Activated T-helper 2 cell treated with anti-CD3 and anti-CD28 coated beads, Interferon-gamma antibody, Interleukin-2, Interleukin-4, amounts not matched to agents 10 μg/mL and 5 μg/mL and 100 μg/mL, durations not matched to agents 14 hours and 24 hours and 36 hours (primary cell): ENCODE measurements at regions of chr6 and their contacts with region 1.

Region 1: GRCh38 chr6:44265007-44265721 is at the start of gene NFKBIE:
- DNase-seq: peak; percentile 89
- H3K4me3 Mint-ChIP-seq: peak within 1 kb of the TSS; percentile 97
- H3K27ac Mint-ChIP-seq: peak within 1 kb of the TSS; percentile 91
- H3K4me1 Mint-ChIP-seq: peaks cover 43% of the 10 kb centered on the region
- H3K27me3 Mint-ChIP-seq: peaks cover 18% of the 10 kb centered on the region
- total RNA-seq, gene NFKBIE: 23.8 and 25.1 TPM in 2 replicates

Region 2: DNA sequence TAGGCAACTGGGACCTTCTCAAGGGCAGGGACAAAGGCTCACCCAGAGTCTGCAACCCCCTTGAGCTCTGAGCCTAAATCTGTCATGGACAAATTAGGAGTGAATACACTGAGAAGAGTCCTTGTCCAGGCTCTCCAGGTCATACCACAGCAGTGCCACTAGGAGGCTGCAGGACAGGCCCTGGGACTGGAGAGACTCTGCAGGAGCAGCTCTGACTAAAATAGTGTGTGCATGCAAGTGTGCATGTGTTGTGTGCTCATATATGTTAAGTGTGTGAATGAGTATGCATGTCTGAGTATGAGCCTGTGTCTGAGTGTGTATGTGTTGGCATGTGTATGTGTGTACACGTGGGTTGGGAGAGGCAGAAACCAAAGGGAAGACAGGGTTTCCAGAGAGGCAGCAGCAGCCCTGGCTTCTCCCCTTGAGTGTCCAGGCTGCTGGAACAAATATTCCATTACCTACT is 165.0 kb before region 1 on chr6:
- intact Hi-C with region 1: no loop called
- DNase-seq: no peak
- H3K4me3 Mint-ChIP-seq: no peak overlapping the region
- H3K27ac Mint-ChIP-seq: no peak overlapping the region
- H3K4me1 Mint-ChIP-seq: peaks cover 6% of the 10 kb centered on the region
- H3K27me3 Mint-ChIP-seq: no peaks in the 10 kb centered on the region

Region 3: GRCh38 chr6:44237813-44238433 is 27.2 kb before region 1 on chr6:
- intact Hi-C with region 1: loop called (anchors 1 kb)
- DNase-seq: peak; percentile 78
- H3K4me3 Mint-ChIP-seq: peak overlapping the region; percentile 83
- H3K27ac Mint-ChIP-seq: peak overlapping the region; percentile 89
- H3K4me1 Mint-ChIP-seq: peaks cover 48% of the 10 kb centered on the region
- H3K27me3 Mint-ChIP-seq: no peaks in the 10 kb centered on the region

Region 4: DNA sequence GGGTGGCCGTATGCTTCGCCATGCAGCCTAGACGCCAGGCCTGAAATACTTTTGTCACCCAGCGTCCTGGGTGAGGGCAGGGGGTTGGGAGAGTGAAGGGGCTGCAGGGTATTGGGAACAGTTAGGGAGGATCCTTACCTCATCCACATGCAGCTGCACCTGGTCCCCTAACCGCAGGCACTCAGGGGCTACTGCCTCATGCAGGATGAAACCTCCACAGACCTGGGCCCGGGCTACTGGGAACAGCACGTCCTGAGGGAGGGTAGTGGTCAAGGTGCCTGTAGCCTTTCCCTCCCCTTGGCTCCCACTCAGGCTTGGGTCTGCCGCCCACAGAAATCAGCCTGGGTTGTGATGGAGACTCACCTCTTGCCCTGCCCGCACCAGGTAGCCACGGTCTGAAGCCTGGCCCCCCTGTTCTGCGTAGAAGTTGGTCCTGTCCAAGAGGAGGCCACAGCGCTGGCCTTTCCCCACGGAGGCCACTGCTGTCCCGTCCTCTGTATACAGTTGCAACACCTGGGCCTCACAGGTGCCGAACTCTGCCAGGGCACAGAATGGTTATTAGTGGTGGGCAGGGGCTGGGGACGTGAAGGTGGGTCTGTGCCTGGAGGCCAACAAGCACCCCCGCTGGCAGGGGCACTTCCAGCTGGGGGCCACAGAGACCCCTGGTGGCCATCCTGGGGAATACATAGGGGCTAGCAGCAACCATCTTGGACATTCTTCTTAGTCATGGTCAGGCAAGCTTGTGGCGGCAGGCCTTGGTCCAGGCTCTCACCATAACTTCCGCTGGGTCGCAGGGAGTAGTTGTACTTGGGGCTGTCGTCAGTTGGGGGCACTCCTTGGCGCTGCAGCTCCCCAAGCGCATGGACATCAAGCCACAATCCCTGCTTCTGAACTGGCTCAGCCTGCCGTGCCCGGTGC is 39.4 kb after region 1 on chr6:
- intact Hi-C with region 1: loop called (anchors 2 kb)
- DNase-seq: no peak
- H3K4me3 Mint-ChIP-seq: no peak overlapping the region
- H3K27ac Mint-ChIP-seq: no peak overlapping the region
- H3K4me1 Mint-ChIP-seq: no peaks in the 10 kb centered on the region
- H3K27me3 Mint-ChIP-seq: no peaks in the 10 kb centered on the region

Region 5: GRCh38 chr6:44338228-44339122 is 73.3 kb after region 1 on chr6:
- intact Hi-C with region 1: loop called (anchors 1 kb)
- DNase-seq: peak; percentile 59
- H3K4me3 Mint-ChIP-seq: no peak overlapping the region
- H3K27ac Mint-ChIP-seq: no peak overlapping the region
- H3K4me1 Mint-ChIP-seq: peaks cover 4% of the 10 kb centered on the region
- H3K27me3 Mint-ChIP-seq: peaks cover 24% of the 10 kb centered on the region

Region 6: DNA sequence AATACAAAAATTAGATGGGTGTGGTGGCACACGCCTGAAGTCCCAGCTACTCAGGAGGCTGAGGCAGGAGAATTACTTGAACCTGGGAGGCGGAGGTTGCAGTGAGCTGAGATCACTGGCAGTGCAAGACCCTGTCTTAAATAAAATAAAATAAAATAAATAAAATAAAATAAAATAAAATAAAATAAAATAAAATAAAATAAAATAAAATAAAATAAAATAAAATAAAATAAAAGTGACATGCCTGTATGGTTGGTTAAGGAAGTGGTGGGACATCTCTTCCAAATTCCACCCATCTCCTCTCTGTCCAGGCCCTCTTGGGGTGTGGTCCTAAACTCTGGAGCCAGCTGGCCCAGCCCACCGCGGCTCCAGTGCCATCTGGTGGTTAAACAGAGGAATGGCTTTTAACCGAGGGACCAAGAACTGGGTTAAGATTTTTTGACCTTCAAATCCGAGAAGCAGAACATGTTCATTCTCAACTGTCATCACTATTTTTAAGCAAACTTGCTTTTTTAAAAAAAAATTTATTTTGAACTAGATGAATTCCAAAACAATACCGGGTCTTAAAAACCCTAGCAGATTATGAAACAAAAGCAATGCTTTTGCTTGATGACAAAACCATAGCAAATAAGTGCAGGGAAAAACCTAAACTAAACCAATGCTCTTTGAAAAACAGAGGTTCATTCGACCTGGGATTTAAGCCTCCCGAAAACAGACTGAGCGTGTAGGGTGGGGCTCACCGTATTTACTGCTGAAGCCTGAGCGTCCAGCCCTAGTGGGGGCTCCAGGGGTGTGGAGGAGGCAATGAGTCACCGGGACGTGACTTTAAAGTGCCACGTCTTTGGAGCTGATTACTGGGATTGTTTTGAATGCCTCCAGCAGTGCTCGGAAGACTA is 191.2 kb after region 1 on chr6:
- intact Hi-C with region 1: loop called (anchors 10 kb)
- DNase-seq: no peak
- H3K4me3 Mint-ChIP-seq: no peak overlapping the region
- H3K27ac Mint-ChIP-seq: no peak overlapping the region
- H3K4me1 Mint-ChIP-seq: peaks cover 3% of the 10 kb centered on the region
- H3K27me3 Mint-ChIP-seq: peaks cover 2% of the 10 kb centered on the region